PC-9 (cell line): ENCODE measurements at regions of chr14 and their contacts with region 1.

Region 1: DNA sequence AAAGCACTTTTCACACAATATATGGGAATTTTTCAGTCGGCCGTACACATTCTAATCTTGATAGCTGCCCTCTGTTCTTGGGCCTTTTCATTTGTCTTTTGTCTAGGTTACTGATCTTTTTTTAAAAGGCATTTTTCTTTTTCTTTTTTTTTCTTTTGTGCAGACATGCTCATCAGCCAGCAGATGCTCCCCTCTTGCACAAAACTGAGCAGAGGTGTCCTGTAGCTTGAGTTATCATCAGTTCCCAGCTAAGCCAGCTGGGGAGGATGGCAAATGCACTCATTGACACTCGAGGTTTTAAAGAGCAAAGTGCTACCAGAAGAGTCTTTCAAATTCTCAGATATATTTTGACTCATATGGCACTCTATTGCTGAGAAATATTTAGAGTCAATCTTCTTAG is 913.9 kb upstream of the SEL1L start:
- DNase-seq: no peak
- H3K4me3 ChIP-seq: no peak overlapping the region
- H3K27ac ChIP-seq: no peak overlapping the region
- H3K4me1 ChIP-seq: no peaks in the 10 kb centered on the region
- H3K27me3 ChIP-seq: no peaks in the 10 kb centered on the region
- CTCF ChIP-seq: no peak

Region 2: DNA sequence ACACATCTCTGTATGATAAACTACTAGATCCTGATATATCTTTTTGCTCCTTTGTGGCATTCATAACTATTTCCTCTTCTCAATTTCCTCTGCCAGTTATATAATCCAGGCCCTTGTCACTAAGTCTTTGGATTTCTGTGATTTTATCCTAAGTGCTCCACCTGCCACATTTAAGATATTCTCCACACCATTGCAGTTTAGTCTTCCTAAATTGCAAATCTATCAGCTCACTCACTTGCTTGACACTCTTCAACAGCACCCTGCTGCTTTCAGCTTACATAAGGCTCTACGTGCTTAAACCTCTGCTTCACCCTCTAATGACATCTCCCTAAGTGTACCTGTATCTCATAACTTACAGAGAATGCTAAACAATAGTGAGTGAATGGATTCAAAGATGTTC is 118.2 kb after region 1 on chr14:
- CTCF ChIA-PET with region 1: no interaction called
- POLR2A ChIA-PET with region 1: no interaction called
- intact Hi-C with region 1: loop called (anchors 5 kb)
- DNase-seq: no peak
- H3K4me3 ChIP-seq: no peak overlapping the region
- H3K27ac ChIP-seq: no peak overlapping the region
- H3K4me1 ChIP-seq: no peaks in the 10 kb centered on the region
- H3K27me3 ChIP-seq: no peaks in the 10 kb centered on the region
- CTCF ChIP-seq: no peak